ENCODE measurements at regions of chr19 and their contacts with region 1.

Region 1: GRCh38 chr19:12478234-12478941 is 6.2 kb downstream of the ZNF709 start:
- DNase-seq: no peak
- H3K4me3 Mint-ChIP-seq: no peak overlapping the region
- H3K27ac Mint-ChIP-seq: peak overlapping the region; percentile 33
- H3K4me1 Mint-ChIP-seq: peaks cover 31% of the 10 kb centered on the region
- H3K27me3 Mint-ChIP-seq: no peaks in the 10 kb centered on the region

Region 2: GRCh38 chr19:12400633-12401502 is 77.5 kb before region 1 on chr19 and contains the start of gene ZNF799:
- CTCF ChIA-PET with region 1: no interaction called
- intact Hi-C with region 1: loop called (anchors 5 kb)
- DNase-seq: peak; percentile 93
- H3K4me3 Mint-ChIP-seq: peak within 1 kb of the TSS; percentile 89
- H3K27ac Mint-ChIP-seq: peak within 1 kb of the TSS; percentile 56
- H3K4me1 Mint-ChIP-seq: peaks cover 8% of the 10 kb centered on the region
- H3K27me3 Mint-ChIP-seq: no peaks in the 10 kb centered on the region
- total RNA-seq, gene ZNF799: 3.3 to 3.6 TPM

Region 3: GRCh38 chr19:12425236-12425887 is 53.0 kb before region 1 on chr19:
- CTCF ChIA-PET with region 1: no interaction called
- intact Hi-C with region 1: no loop called
- DNase-seq: no peak
- H3K4me3 Mint-ChIP-seq: no peak overlapping the region
- H3K27ac Mint-ChIP-seq: no peak overlapping the region
- H3K4me1 Mint-ChIP-seq: no peaks in the 10 kb centered on the region
- H3K27me3 Mint-ChIP-seq: no peaks in the 10 kb centered on the region

Region 4: GRCh38 chr19:12983542-12984142 is 505.3 kb after region 1 on chr19:
- CTCF ChIA-PET with region 1: no interaction called
- intact Hi-C with region 1: no loop called
- DNase-seq: peak; percentile 81
- H3K4me3 Mint-ChIP-seq: no peak overlapping the region
- H3K27ac Mint-ChIP-seq: no peak overlapping the region
- H3K4me1 Mint-ChIP-seq: no peaks in the 10 kb centered on the region
- H3K27me3 Mint-ChIP-seq: no peaks in the 10 kb centered on the region

Measured in activated naive CD4-positive, alpha-beta T cell treated with anti-CD3 and anti-CD28 coated beads for 36 hours (primary cell).